ENCODE measurements at regions of chr22 and their contacts with region 1.

Region 1: DNA sequence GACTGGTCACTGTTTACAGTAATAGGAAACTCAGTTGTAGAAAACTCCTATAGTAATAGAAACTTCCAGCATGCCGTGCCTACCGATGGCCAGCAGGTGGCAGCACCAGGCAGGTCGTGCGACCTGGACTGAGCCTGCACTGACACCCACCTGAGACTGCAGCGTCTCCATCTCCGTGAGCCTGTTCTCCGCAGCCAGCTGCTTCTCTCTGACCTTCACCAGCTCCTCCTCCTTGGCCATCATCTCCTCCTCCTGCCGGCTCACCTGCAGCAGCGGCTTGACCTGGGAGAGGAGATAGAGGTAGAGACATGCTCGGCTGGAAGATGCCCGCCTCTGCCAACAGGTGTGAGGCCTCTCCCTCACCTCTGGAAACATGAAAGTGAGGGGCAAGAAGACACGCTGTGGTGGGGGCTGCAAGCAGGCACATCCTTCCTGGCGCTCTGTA is 48.5 kb downstream of the APOL1 start:
- DNase-seq: peak; percentile 29
- ATAC-seq: peak; percentile 87
- H3K4me3 ChIP-seq: no peak overlapping the region
- H3K27ac ChIP-seq: no peak overlapping the region
- H3K4me1 ChIP-seq: no peaks in the 10 kb centered on the region
- H3K27me3 ChIP-seq: no peaks in the 10 kb centered on the region
- CTCF ChIP-seq: peak; percentile 70 to 95 (median 95); a peak in 5 of 6 replicates
- POLR2A ChIP-seq: no peak
- RAD21 ChIP-seq: peak; percentile 91

Region 2: DNA sequence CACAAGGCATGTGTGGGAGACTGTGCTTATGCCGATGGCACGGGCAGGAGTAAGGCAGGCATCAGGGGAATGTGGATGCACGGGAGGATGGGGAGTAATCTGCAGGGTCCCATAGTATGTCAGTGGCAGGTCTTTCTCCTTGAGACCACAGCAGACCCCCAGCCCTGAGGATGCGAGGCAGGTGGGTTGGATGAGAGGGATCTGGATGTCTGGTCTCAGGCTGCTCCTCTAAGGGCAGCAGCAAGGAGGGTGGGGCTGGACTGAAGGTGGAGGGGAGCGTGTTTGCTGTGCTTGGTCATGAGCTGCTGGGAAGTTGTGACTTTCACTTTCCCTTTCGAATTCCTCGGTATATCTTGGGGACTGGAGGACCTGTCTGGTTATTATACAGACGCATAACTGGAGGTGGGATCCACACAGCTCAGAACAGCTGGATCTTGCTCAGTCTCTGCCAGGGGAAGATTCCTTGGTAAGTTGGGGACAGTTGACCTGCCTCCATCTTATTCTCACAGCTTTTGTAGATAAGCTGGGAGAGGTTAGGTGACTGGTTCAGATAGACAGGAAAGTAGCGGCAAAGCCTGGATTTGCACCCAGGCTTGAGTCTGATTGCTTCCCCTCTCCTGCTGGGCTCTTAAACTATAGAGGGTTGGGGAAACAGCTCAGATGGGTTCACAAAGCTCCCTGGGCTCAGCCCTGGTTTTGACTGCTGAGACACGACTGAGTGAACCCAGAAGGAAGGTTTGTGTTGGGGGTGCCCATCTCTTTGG is 48.5 kb before region 1 on chr22 and contains the start of gene APOL1:
- CTCF ChIA-PET with region 1: no interaction called
- POLR2A ChIA-PET with region 1: no interaction called
- RAD21 ChIA-PET with region 1: no interaction called
- intact Hi-C with region 1: no loop called
- DNase-seq: no peak
- ATAC-seq: no peak
- H3K4me3 ChIP-seq: no peak within 1 kb of the TSS
- H3K27ac ChIP-seq: no peak within 1 kb of the TSS
- H3K4me1 ChIP-seq: no peaks in the 10 kb centered on the region
- H3K27me3 ChIP-seq: no peaks in the 10 kb centered on the region
- CTCF ChIP-seq: no peak
- POLR2A ChIP-seq: no peak
- RAD21 ChIP-seq: no peak
- total RNA-seq, gene APOL1: 0.30 TPM

Region 3: DNA sequence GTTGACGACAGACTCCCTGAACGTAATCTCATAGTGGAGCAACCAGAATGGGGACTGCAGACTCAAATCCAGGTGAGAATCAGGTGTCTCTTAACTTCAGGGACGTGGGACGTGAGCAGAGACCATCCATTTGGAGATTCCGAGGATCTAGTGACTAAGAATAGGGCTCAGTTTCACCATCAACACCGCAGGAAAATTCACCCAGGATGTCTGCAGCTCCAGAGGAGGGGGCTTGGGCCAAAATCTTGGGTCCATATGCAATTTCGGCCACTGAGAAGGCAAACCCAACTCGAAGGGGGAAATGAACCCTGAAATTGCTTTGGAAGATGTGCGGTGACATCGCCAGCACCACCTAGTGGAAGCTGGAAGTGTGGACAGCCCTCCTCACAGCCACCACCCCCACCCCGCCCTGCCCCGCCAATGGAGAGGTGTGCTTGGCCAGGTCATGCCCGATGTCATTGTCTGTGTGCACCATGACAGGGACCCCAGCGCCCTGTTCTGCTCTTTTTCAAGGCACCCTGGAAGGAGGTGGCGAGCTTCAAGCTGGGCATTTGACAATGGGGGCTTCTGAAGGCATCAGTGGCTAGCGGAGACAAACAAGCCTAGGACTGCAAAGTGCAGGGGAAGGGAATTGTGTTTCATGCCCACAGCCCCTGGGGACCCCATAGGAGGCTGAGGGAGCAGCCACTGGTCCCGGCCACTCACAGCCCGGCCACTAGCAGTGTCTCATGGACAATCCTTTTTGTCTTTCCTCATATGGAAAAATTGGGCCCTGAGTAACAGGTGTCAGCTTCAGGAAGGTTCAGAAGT is 23.7 kb before region 1 on chr22:
- CTCF ChIA-PET with region 1: no interaction called
- POLR2A ChIA-PET with region 1: no interaction called
- RAD21 ChIA-PET with region 1: no interaction called
- intact Hi-C with region 1: no loop called
- DNase-seq: peak; percentile 40
- ATAC-seq: peak; percentile 93
- H3K4me3 ChIP-seq: no peak overlapping the region
- H3K27ac ChIP-seq: no peak overlapping the region
- H3K4me1 ChIP-seq: peaks cover 0 to 8% of the 10 kb centered on the region in 2 experiments; a peak in 2 of 4 replicates
- H3K27me3 ChIP-seq: no peaks in the 10 kb centered on the region; the same call in 1 of the 2 replicates
- CTCF ChIP-seq: peak; percentile 47 to 81 (median 69); a peak in 5 of 6 replicates
- POLR2A ChIP-seq: no peak
- RAD21 ChIP-seq: peak; percentile 48

Region 4: GRCh38 chr22:36486619-36487384 is 185.4 kb after region 1 on chr22:
- CTCF ChIA-PET with region 1: interaction called, 13 read pairs
- POLR2A ChIA-PET with region 1: no interaction called
- RAD21 ChIA-PET with region 1: interaction called in 1 of 2 experiments, 3 read pairs
- intact Hi-C with region 1: no loop called
- DNase-seq: no peak
- ATAC-seq: no peak
- H3K4me3 ChIP-seq: no peak overlapping the region
- H3K27ac ChIP-seq: no peak overlapping the region
- H3K4me1 ChIP-seq: peaks cover 0 to 5% of the 10 kb centered on the region in 2 experiments; a peak in 1 of 4 replicates
- H3K27me3 ChIP-seq: no peaks in the 10 kb centered on the region
- CTCF ChIP-seq: peak; percentile 42 to 74 (median 71); a peak in 5 of 6 replicates
- POLR2A ChIP-seq: no peak
- RAD21 ChIP-seq: peak; percentile 72